ENCODE measurements at regions of chr19 and their contacts with region 1.

Region 1: DNA sequence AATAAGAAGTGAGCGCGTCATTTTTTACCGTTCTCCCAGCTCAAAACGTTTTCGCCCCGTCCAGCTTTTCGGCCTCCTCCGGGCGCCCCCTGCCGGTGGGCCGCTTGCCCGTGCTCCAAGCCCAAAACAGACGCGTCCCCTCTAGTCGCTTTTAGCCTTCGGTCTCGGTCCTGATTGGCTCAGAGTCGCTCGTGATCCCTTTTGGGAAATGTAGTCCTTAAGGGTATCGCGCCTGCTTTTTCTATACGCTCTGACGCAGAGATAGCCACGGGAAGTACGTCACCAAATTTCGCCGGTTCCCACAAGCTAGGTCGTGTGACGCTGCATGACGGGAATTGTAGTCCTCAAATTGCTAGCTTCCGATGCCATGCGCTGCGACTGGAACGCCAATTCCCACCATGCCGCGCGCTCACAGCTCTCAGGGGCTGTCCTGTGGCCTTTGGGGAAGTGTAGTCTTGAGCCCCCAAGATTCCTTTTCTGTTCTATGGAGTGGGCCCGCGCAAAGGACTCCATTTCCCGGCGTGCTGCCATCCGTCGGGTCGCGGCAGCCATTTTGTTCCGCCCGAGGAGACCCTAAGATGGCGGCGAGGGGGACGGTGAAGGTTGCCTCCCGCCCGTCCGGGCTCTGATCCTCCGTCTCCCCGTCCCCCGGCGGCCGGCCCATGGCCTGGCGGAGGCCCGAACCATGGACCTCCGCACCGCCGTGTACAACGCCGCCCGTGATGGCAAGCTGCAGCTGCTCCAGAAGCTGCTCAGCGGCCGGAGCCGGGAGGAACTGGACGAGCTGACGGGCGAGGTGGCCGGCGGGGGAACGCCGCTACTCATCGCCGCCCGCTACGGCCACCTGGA is at the start of gene FEM1A:
- DNase-seq: peak; percentile 95 to 100 (median 97)
- ATAC-seq: peak; percentile 93
- H3K4me3 ChIP-seq: peak within 1 kb of the TSS; percentile 76
- H3K4me3 Mint-ChIP-seq: peak within 1 kb of the TSS; percentile 88
- H3K27ac ChIP-seq: peak within 1 kb of the TSS; percentile 83 to 87
- H3K27ac Mint-ChIP-seq: peak within 1 kb of the TSS; percentile 62
- H3K4me1 ChIP-seq: peaks cover 40% of the 10 kb centered on the region
- H3K4me1 Mint-ChIP-seq: peaks cover 26% of the 10 kb centered on the region
- H3K27me3 ChIP-seq: no peaks in the 10 kb centered on the region
- H3K27me3 Mint-ChIP-seq: no peaks in the 10 kb centered on the region
- CTCF ChIP-seq: peak; percentile 99
- total RNA-seq, gene FEM1A: 11.8 to 12.1 TPM

Region 2: GRCh38 chr19:4723367-4724187 is 67.8 kb before region 1 on chr19 and contains the start of gene DPP9:
- CTCF ChIA-PET with region 1: interaction called, 32 read pairs
- POLR2A ChIA-PET with region 1: interaction called, 83 read pairs
- intact Hi-C with region 1: loop called (anchors 1 kb)
- DNase-seq: peak; percentile 93 to 100 (median 96)
- ATAC-seq: peak; percentile 93
- H3K4me3 ChIP-seq: peak within 1 kb of the TSS; percentile 97
- H3K4me3 Mint-ChIP-seq: peak within 1 kb of the TSS; percentile 95
- H3K27ac ChIP-seq: peak within 1 kb of the TSS; percentile 64 to 85
- H3K27ac Mint-ChIP-seq: peak within 1 kb of the TSS; percentile 97
- H3K4me1 ChIP-seq: peaks cover 30% of the 10 kb centered on the region
- H3K4me1 Mint-ChIP-seq: peaks cover 25% of the 10 kb centered on the region
- H3K27me3 ChIP-seq: no peaks in the 10 kb centered on the region
- H3K27me3 Mint-ChIP-seq: peaks cover 13% of the 10 kb centered on the region
- CTCF ChIP-seq: no peak
- total RNA-seq, gene DPP9: 67.9 to 72.8 TPM

Region 3: DNA sequence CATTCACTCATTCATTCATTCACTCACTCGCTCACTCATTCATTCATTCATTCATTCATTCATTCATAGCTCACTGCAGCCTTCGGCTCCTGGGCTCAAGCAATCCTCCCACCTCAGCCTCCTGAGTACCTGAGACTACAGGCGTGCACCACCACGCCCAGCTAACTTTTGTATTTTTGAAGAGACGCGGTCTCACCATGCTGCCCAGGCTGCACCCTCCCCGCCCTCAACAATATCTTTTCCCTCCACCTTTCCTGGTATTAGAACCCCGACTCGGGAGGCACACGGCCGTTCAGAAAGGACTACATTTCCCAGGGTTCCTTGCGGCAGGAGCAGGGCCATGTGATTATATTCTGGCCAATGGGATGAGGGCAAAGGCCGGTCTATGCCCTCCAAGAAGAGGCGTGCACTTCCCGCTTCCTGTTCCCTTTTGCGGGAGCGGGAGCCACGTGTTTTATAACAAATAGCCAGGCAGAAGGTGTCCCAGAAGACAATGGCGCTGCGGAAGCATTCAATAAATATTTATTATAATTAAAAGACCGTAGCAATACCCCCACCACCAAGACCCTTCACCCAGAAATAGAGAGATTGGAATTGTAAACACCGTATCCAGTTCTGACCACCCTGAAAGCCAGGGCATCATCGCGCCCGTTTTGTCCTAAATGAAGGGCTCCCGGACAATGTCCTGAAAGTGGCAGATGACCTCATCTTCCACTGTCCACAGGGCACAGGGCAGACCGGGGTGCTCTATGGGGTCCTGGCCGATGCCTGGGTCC is 24.2 kb after region 1 on chr19:
- CTCF ChIA-PET with region 1: no interaction called
- POLR2A ChIA-PET with region 1: no interaction called
- intact Hi-C with region 1: loop called in 1 of 2 experiments (anchors 1 kb)
- DNase-seq: peak; percentile 51 to 88 (median 64)
- ATAC-seq: peak; percentile 87
- H3K4me3 ChIP-seq: peak overlapping the region; percentile 24
- H3K4me3 Mint-ChIP-seq: peak overlapping the region; percentile 52
- H3K27ac ChIP-seq: no peak overlapping the region
- H3K27ac Mint-ChIP-seq: peak overlapping the region; percentile 8
- H3K4me1 ChIP-seq: peaks cover 17% of the 10 kb centered on the region
- H3K4me1 Mint-ChIP-seq: peaks cover 17% of the 10 kb centered on the region
- H3K27me3 ChIP-seq: no peaks in the 10 kb centered on the region
- H3K27me3 Mint-ChIP-seq: no peaks in the 10 kb centered on the region
- CTCF ChIP-seq: no peak

Region 4: GRCh38 chr19:4844348-4845179 is 53.2 kb after region 1 on chr19:
- CTCF ChIA-PET with region 1: no interaction called
- POLR2A ChIA-PET with region 1: no interaction called
- intact Hi-C with region 1: no loop called
- DNase-seq: no peak
- ATAC-seq: no peak
- H3K4me3 ChIP-seq: no peak overlapping the region
- H3K4me3 Mint-ChIP-seq: no peak overlapping the region
- H3K27ac ChIP-seq: no peak overlapping the region
- H3K27ac Mint-ChIP-seq: no peak overlapping the region
- H3K4me1 ChIP-seq: peaks cover 13% of the 10 kb centered on the region
- H3K4me1 Mint-ChIP-seq: peaks cover 6% of the 10 kb centered on the region
- H3K27me3 ChIP-seq: no peaks in the 10 kb centered on the region
- H3K27me3 Mint-ChIP-seq: no peaks in the 10 kb centered on the region
- CTCF ChIP-seq: no peak

Region 5: GRCh38 chr19:4877753-4878490 is 86.5 kb after region 1 on chr19:
- CTCF ChIA-PET with region 1: no interaction called
- POLR2A ChIA-PET with region 1: no interaction called
- intact Hi-C with region 1: no loop called
- DNase-seq: no peak
- ATAC-seq: no peak
- H3K4me3 ChIP-seq: no peak overlapping the region
- H3K4me3 Mint-ChIP-seq: no peak overlapping the region
- H3K27ac ChIP-seq: no peak overlapping the region
- H3K27ac Mint-ChIP-seq: no peak overlapping the region
- H3K4me1 ChIP-seq: peaks cover 13% of the 10 kb centered on the region
- H3K4me1 Mint-ChIP-seq: no peaks in the 10 kb centered on the region
- H3K27me3 ChIP-seq: no peaks in the 10 kb centered on the region
- H3K27me3 Mint-ChIP-seq: peaks cover 7% of the 10 kb centered on the region
- CTCF ChIP-seq: no peak

Region 6: DNA sequence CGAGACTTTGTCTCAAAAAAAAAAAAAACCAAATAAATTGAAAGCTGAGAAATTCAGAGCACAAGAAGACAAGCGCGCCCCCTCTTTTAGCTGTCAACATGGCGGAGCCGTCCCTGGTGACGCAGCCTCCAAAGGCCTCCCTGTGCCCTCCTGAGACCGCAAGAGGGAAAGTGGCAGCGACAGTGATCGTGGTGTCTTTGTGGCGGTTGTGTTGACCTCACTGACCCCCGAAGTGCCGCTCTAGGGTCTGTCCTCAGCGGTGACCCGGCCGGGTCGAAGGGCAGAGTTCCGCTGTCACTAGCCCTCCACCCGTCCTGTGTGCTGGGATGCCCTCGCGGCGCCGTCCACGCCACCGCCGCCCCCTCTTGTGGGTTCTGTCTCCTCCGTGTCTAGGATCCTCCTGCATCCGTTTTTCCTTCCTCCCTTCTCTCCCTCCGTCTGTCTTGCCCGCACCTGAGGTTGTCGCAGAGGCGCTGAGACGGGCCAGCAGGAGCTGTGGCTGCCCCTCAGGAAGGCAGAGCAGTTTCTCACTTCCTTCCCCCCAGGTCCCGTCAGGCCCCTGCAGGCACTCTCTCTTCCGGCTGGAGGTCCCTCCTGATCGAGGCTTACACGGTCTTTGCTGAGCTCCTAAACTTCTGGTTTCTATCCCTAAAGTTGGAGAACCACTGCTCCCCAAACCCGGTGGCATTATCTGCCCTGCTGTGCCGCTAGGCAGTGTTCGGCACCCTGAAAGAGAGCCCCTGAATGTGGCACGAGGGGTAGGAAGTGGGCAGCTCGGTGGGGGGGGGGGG is 125.1 kb after region 1 on chr19:
- CTCF ChIA-PET with region 1: interaction called, 11 read pairs
- POLR2A ChIA-PET with region 1: interaction called, 18 read pairs
- intact Hi-C with region 1: no loop called
- DNase-seq: peak; percentile 30 to 73 (median 46)
- ATAC-seq: peak; percentile 38
- H3K4me3 ChIP-seq: peak overlapping the region; percentile 82
- H3K4me3 Mint-ChIP-seq: peak overlapping the region; percentile 98
- H3K27ac ChIP-seq: peak overlapping the region; percentile 65 to 90
- H3K27ac Mint-ChIP-seq: peak overlapping the region; percentile 96
- H3K4me1 ChIP-seq: peaks cover 56% of the 10 kb centered on the region
- H3K4me1 Mint-ChIP-seq: peaks cover 38% of the 10 kb centered on the region
- H3K27me3 ChIP-seq: no peaks in the 10 kb centered on the region
- H3K27me3 Mint-ChIP-seq: no peaks in the 10 kb centered on the region
- CTCF ChIP-seq: no peak

Region 7: GRCh38 chr19:4939466-4939865 is 148.1 kb after region 1 on chr19:
- CTCF ChIA-PET with region 1: no interaction called
- POLR2A ChIA-PET with region 1: no interaction called
- intact Hi-C with region 1: no loop called
- DNase-seq: no peak
- ATAC-seq: no peak
- H3K4me3 ChIP-seq: no peak overlapping the region
- H3K4me3 Mint-ChIP-seq: no peak overlapping the region
- H3K27ac ChIP-seq: no peak overlapping the region
- H3K27ac Mint-ChIP-seq: no peak overlapping the region
- H3K4me1 ChIP-seq: no peaks in the 10 kb centered on the region
- H3K4me1 Mint-ChIP-seq: no peaks in the 10 kb centered on the region
- H3K27me3 ChIP-seq: no peaks in the 10 kb centered on the region
- H3K27me3 Mint-ChIP-seq: no peaks in the 10 kb centered on the region
- CTCF ChIP-seq: no peak

Region 8: DNA sequence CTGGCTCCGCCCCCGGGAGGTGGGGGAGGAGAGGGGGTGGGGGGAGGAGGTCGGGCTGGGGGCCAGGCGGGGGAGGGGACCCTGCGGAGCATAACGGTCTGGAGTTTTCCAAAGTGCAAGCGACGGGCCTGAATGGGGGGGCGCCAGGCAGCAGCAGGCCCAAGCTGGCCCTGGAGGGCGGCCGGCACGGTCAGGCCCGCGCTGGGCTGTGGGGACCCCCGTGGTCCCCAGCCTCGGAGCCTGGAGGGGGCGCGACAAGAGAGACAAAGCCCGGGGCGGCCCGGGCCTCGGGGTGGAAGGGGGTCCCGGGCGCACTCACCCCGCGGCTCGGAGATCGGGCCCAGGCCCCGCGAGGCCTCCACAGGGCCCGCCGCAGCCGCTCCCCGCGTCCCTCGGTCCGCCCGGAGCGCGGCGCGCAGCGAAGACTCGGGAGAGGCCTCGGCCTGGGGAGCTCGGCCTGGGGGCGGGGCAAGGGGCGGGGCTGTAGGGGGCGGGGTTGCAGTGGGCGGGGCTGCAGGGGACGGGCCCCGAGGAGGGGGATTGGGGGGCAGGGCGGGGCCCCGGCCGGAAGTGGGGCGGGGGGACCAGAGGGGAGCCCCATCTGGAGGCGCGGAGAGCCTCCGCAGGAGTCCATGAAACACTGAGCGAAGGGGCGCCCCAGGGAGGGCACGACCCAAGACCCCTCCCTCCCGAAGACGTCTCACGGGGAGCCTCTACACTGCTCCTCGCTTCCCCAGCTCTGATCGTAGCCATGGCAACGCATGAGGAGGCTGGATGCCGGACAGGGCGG is 501.6 kb after region 1 on chr19:
- CTCF ChIA-PET with region 1: no interaction called
- POLR2A ChIA-PET with region 1: no interaction called
- intact Hi-C with region 1: no loop called
- DNase-seq: peak; percentile 25 to 77 (median 50)
- ATAC-seq: peak; percentile 77
- H3K4me3 ChIP-seq: peak overlapping the region; percentile 56
- H3K4me3 Mint-ChIP-seq: peak overlapping the region; percentile 79
- H3K27ac ChIP-seq: no peak overlapping the region
- H3K27ac Mint-ChIP-seq: no peak overlapping the region
- H3K4me1 ChIP-seq: peaks cover 21% of the 10 kb centered on the region
- H3K4me1 Mint-ChIP-seq: peaks cover 10% of the 10 kb centered on the region
- H3K27me3 ChIP-seq: peaks cover 16 to 18% of the 10 kb centered on the region in 2 experiments
- H3K27me3 Mint-ChIP-seq: peaks cover 16% of the 10 kb centered on the region
- CTCF ChIP-seq: no peak

Region 9: GRCh38 chr19:5690125-5690954 is 898.9 kb after region 1 on chr19 and contains the start of gene RPL36:
- CTCF ChIA-PET with region 1: no interaction called
- POLR2A ChIA-PET with region 1: no interaction called
- intact Hi-C with region 1: loop called in 1 of 2 experiments (anchors 10 kb)
- DNase-seq: peak; percentile 95 to 100 (median 99)
- ATAC-seq: peak; percentile 65
- H3K4me3 ChIP-seq: peak within 1 kb of the TSS; percentile 100
- H3K4me3 Mint-ChIP-seq: peak within 1 kb of the TSS; percentile 96
- H3K27ac ChIP-seq: peak within 1 kb of the TSS; percentile 91 to 95
- H3K27ac Mint-ChIP-seq: peak within 1 kb of the TSS; percentile 96
- H3K4me1 ChIP-seq: peaks cover 54% of the 10 kb centered on the region
- H3K4me1 Mint-ChIP-seq: peaks cover 43% of the 10 kb centered on the region
- H3K27me3 ChIP-seq: no peaks in the 10 kb centered on the region
- H3K27me3 Mint-ChIP-seq: no peaks in the 10 kb centered on the region
- CTCF ChIP-seq: peak; percentile 98
- total RNA-seq, gene RPL36: 1,509 to 1,565 TPM

Measured in CD4-positive, alpha-beta T cell (primary cell).